Activated CD4-positive, alpha-beta memory T cell treated with anti-CD3 and anti-CD28 coated beads, Interleukin-2, amount 10 ng/mL, durations not matched to agents 7 days and 5 days (primary cell): ENCODE measurements at regions of chr2 and their contacts with region 1.

Region 1: DNA sequence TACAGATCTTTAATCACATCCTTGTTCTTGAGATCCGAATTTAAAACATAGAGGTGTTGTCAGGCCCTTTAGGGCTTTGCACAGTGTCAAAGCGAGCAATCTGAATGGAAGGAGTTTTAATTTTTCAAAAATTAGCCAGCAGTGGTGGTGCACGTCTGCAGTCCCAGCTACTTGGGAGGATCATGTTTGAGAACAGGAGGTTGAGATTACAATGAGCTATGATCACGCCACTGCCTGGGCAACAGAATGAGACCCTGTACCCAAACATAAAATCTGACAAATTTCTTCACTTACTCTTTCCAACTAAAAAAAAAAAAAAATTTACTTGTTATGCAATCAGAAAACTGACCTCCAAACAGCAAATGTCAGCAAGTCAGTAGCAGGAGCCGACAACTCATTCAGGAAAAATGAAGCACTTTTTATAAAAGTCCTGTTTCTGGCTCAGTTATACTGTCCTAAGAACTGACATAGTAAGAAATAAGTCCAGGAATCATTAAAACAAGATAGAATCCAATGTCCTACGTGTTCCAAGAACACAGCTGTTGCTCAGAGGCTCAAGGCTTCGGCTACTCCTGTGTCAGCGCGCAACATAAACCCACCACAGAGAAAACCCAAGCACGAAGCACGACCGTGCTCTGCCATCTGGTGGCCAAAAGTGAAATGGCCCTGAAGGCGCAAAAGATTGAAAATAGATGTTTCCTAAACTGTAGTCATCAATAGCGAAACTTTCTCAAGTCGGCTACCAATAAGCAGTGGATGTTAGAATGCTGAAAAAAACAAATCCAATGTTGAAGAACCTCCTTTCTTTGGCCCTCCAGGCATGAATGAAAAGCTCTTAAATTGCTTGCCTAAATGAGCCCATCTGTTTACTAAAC is 138.1 kb downstream of the INO80D start:
- DNase-seq: peak; percentile 61
- H3K4me3 Mint-ChIP-seq: no peak overlapping the region
- H3K27ac Mint-ChIP-seq: no peak overlapping the region
- H3K4me1 Mint-ChIP-seq: peaks cover 4% of the 10 kb centered on the region
- H3K27me3 Mint-ChIP-seq: peaks cover 13% of the 10 kb centered on the region

Region 2: GRCh38 chr2:205936446-205936845 is 11.4 kb before region 1 on chr2:
- CTCF ChIA-PET with region 1: interaction called, 13 read pairs
- POLR2A ChIA-PET with region 1: no interaction called
- DNase-seq: no peak
- H3K4me3 Mint-ChIP-seq: no peak overlapping the region
- H3K27ac Mint-ChIP-seq: no peak overlapping the region
- H3K4me1 Mint-ChIP-seq: no peaks in the 10 kb centered on the region
- H3K27me3 Mint-ChIP-seq: peaks cover 5% of the 10 kb centered on the region

Region 3: GRCh38 chr2:205975082-205975949 is 27.5 kb after region 1 on chr2:
- CTCF ChIA-PET with region 1: no interaction called
- POLR2A ChIA-PET with region 1: no interaction called
- DNase-seq: no peak
- H3K4me3 Mint-ChIP-seq: no peak overlapping the region
- H3K27ac Mint-ChIP-seq: no peak overlapping the region
- H3K4me1 Mint-ChIP-seq: no peaks in the 10 kb centered on the region
- H3K27me3 Mint-ChIP-seq: peaks cover 6% of the 10 kb centered on the region